CD8-positive, alpha-beta T cell (primary cell): ENCODE measurements at regions of chr6 and their contacts with region 1.

Region 1: GRCh38 chr6:28988536-28989311 is 16.4 kb downstream of the ZNF311 start:
- DNase-seq: peak; percentile 54 to 87 (median 77)
- ATAC-seq: peak; percentile 90
- H3K4me3 ChIP-seq: peak overlapping the region; percentile 18 to 47
- H3K4me3 Mint-ChIP-seq: peak overlapping the region; percentile 77
- H3K27ac ChIP-seq: no peak overlapping the region
- H3K27ac Mint-ChIP-seq: no peak overlapping the region
- H3K4me1 ChIP-seq: peaks cover 12% of the 10 kb centered on the region
- H3K4me1 Mint-ChIP-seq: peaks cover 29% of the 10 kb centered on the region
- H3K27me3 ChIP-seq: no peaks in the 10 kb centered on the region
- H3K27me3 Mint-ChIP-seq: peaks cover 27% of the 10 kb centered on the region
- CTCF ChIP-seq: peak; percentile 64

Region 2: GRCh38 chr6:28683944-28684538 is 304.7 kb before region 1 on chr6:
- CTCF ChIA-PET with region 1: no interaction called
- POLR2A ChIA-PET with region 1: no interaction called
- intact Hi-C with region 1: loop called in 1 of 2 experiments (anchors 2 kb)
- DNase-seq: peak in 3 of 9 experiments; percentile 2 to 60 (median 43)
- ATAC-seq: peak; percentile 80
- H3K4me3 ChIP-seq: no peak overlapping the region
- H3K4me3 Mint-ChIP-seq: no peak overlapping the region
- H3K27ac ChIP-seq: no peak overlapping the region
- H3K27ac Mint-ChIP-seq: no peak overlapping the region
- H3K4me1 ChIP-seq: no peaks in the 10 kb centered on the region
- H3K4me1 Mint-ChIP-seq: peaks cover 8% of the 10 kb centered on the region
- H3K27me3 ChIP-seq: peaks cover 7 to 14% of the 10 kb centered on the region in 2 experiments
- H3K27me3 Mint-ChIP-seq: peaks cover 80% of the 10 kb centered on the region
- CTCF ChIP-seq: peak; percentile 62